Panc1 (cell line): ENCODE measurements at regions of chr17 and their contacts with region 1.

Region 1: DNA sequence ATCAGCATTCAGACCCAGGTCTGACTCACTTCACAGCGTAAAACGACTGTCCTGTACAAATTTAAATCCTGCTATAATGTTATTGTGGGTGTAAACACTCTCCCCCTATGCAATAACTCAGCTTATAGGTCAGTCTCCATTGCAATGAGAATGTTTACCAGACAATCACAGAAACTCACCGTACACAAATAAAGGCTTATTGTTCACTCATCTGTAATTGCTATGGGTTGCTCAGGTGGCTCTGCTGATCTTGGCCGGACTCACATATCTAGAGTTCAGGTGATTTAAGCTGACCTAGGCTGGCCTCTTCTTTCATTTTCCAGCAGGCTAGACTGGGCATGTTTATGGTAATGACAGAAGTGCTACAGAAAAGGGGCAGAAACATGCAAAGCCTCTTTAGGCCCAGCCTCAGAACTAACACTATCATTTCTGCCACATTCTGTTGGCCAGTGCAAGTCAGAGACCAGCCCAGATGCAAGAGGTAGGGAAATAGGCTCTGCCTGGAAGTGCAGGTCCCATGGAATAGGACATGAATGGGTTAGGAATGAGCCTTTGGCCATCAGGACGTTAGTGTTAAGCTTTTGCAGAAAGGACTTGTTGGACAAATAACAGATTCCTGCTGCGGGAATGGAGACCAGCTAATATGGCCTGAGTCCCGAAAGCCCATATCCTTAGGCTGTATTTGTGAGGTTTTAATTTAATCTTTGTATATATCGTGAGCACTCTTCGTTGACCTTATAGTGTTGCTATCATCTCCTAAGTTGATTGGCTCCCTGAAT is 44.0 kb downstream of the HLF start:
- DNase-seq: no peak
- ATAC-seq: no peak
- H3K4me3 ChIP-seq: no peak overlapping the region
- H3K27ac ChIP-seq: no peak overlapping the region
- H3K4me1 ChIP-seq: no peaks in the 10 kb centered on the region
- H3K27me3 ChIP-seq: peaks cover 7% of the 10 kb centered on the region; the same call in 1 of the 2 replicates
- CTCF ChIP-seq: no peak

Region 2: DNA sequence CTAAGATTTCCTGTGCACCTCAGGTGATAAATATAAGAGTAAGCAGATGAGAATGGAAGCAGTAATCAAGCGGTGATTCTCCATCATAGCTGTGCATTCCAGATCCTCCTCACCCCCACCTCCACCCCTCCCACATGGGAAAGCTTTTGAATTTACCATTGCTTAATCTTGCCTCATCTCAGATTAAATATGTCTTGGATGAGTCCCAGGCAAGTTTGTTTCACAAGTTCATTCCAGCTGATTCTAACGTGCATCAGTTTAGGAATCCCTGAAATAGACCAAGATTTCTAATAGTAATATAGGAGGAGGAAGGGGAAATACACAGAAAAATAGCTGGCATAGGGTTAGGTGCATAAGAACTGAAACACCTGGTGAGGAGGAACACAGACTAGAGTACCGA is 1882.3 kb before region 1 on chr17:
- CTCF ChIA-PET with region 1: no interaction called
- POLR2A ChIA-PET with region 1: no interaction called
- in situ Hi-C with region 1: no loop called
- intact Hi-C with region 1: no loop called
- DNase-seq: no peak
- ATAC-seq: no peak
- H3K4me3 ChIP-seq: no peak overlapping the region
- H3K27ac ChIP-seq: no peak overlapping the region
- H3K4me1 ChIP-seq: no peaks in the 10 kb centered on the region
- H3K27me3 ChIP-seq: no peaks in the 10 kb centered on the region
- CTCF ChIP-seq: no peak

Region 3: GRCh38 chr17:55056526-55056925 is 252.3 kb before region 1 on chr17:
- CTCF ChIA-PET with region 1: no interaction called
- POLR2A ChIA-PET with region 1: no interaction called
- in situ Hi-C with region 1: no loop called
- intact Hi-C with region 1: no loop called
- DNase-seq: no peak
- ATAC-seq: no peak
- H3K4me3 ChIP-seq: no peak overlapping the region
- H3K27ac ChIP-seq: no peak overlapping the region
- H3K4me1 ChIP-seq: no peaks in the 10 kb centered on the region
- H3K27me3 ChIP-seq: no peaks in the 10 kb centered on the region
- CTCF ChIP-seq: no peak

Region 4: GRCh38 chr17:55394357-55395021 is 85.7 kb after region 1 on chr17:
- CTCF ChIA-PET with region 1: no interaction called
- POLR2A ChIA-PET with region 1: no interaction called
- in situ Hi-C with region 1: no loop called
- intact Hi-C with region 1: no loop called
- DNase-seq: no peak
- ATAC-seq: no peak
- H3K4me3 ChIP-seq: no peak overlapping the region
- H3K27ac ChIP-seq: no peak overlapping the region
- H3K4me1 ChIP-seq: no peaks in the 10 kb centered on the region
- H3K27me3 ChIP-seq: no peaks in the 10 kb centered on the region
- CTCF ChIP-seq: no peak

Region 5: GRCh38 chr17:55466671-55467070 is 157.9 kb after region 1 on chr17:
- CTCF ChIA-PET with region 1: no interaction called
- POLR2A ChIA-PET with region 1: interaction called, 23 read pairs
- in situ Hi-C with region 1: no loop called
- intact Hi-C with region 1: no loop called
- DNase-seq: no peak
- ATAC-seq: no peak
- H3K4me3 ChIP-seq: no peak overlapping the region
- H3K27ac ChIP-seq: no peak overlapping the region
- H3K4me1 ChIP-seq: no peaks in the 10 kb centered on the region
- H3K27me3 ChIP-seq: no peaks in the 10 kb centered on the region
- CTCF ChIP-seq: no peak

Region 6: DNA sequence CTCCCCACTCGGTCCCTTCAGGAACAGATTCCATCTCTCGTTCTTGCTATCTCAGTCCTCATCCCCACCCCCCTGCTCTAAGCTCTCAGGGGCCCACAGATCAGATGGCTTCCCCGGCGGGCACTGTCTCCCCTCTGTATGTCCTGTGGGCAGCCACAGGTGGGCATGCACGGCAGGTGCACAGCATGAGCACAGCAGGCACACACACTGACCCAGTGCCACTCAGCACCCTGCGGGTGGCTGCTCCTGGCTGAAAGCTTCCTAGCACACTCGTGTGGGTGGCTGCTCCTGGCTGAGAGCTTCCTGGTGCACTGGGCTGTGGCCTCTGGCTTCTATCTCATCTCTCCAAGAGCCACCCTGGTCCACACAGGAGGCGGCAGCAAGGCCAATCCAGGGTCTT is 247.0 kb after region 1 on chr17:
- CTCF ChIA-PET with region 1: no interaction called
- POLR2A ChIA-PET with region 1: no interaction called
- in situ Hi-C with region 1: no loop called
- intact Hi-C with region 1: no loop called
- DNase-seq: no peak
- ATAC-seq: peak; percentile 51; the same call in 1 of the 2 replicates
- H3K4me3 ChIP-seq: no peak overlapping the region
- H3K27ac ChIP-seq: no peak overlapping the region
- H3K4me1 ChIP-seq: no peaks in the 10 kb centered on the region
- H3K27me3 ChIP-seq: peaks cover 7% of the 10 kb centered on the region
- CTCF ChIP-seq: no peak